ENCODE measurements at regions of chr7 and their contacts with region 1.

Region 1: GRCh38 chr7:28926871-28927597 is 31.1 kb downstream of the TRIL start:
- DNase-seq: peak; percentile 2 to 83 (median 44)
- ATAC-seq: peak; percentile 92
- H3K4me3 ChIP-seq: peak overlapping the region; percentile 42 to 55
- H3K4me3 Mint-ChIP-seq: peak overlapping the region; percentile 92
- H3K27ac ChIP-seq: no peak overlapping the region
- H3K27ac Mint-ChIP-seq: no peak overlapping the region
- H3K4me1 ChIP-seq: peaks cover 13% of the 10 kb centered on the region
- H3K4me1 Mint-ChIP-seq: peaks cover 20% of the 10 kb centered on the region
- H3K27me3 ChIP-seq: no peaks in the 10 kb centered on the region
- H3K27me3 Mint-ChIP-seq: peaks cover 11% of the 10 kb centered on the region
- CTCF ChIP-seq: peak; percentile 72

Region 2: GRCh38 chr7:28596245-28596935 is 330.6 kb before region 1 on chr7:
- CTCF ChIA-PET with region 1: no interaction called
- POLR2A ChIA-PET with region 1: no interaction called
- intact Hi-C with region 1: no loop called
- DNase-seq: no peak
- ATAC-seq: no peak
- H3K4me3 ChIP-seq: no peak overlapping the region
- H3K4me3 Mint-ChIP-seq: no peak overlapping the region
- H3K27ac ChIP-seq: no peak overlapping the region
- H3K27ac Mint-ChIP-seq: no peak overlapping the region
- H3K4me1 ChIP-seq: peaks cover 15% of the 10 kb centered on the region
- H3K4me1 Mint-ChIP-seq: peaks cover 8% of the 10 kb centered on the region
- H3K27me3 ChIP-seq: no peaks in the 10 kb centered on the region
- H3K27me3 Mint-ChIP-seq: no peaks in the 10 kb centered on the region
- CTCF ChIP-seq: no peak

Region 3: DNA sequence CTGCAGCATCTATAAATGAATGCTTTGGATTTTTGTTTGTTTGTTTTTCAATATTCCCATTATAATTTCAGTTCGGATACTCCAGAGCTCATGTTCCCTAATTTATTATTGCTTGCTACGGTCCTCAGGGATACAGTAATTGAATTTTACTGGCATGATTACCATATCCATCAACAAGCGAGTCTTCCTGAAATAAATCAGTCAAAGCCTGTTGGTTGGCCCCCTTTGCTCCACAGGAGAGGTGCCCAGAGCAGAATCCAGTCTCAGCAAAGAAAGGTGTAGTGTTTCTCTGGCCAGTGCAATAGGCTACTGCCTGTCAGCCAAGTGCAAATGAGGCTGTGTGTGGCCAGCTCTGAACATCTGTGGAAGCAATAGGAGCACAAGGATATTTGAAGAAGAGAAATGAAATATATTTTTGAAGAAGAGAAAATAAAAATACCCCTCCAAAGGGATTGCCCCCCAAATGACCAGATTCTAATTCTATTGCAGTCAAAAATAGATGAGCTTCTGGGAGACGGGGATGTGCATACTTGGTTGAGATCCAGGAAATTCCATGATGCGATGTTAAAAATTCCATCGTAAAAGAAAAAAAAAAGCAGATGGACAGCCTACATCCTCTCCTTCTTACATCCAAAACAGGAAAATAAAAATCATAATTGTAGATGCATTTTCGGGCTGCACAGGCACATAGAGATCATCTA is 13.0 kb after region 1 on chr7:
- CTCF ChIA-PET with region 1: interaction called, 20 read pairs
- POLR2A ChIA-PET with region 1: interaction called, 3 read pairs
- intact Hi-C with region 1: no loop called
- DNase-seq: no peak
- ATAC-seq: no peak
- H3K4me3 ChIP-seq: no peak overlapping the region
- H3K4me3 Mint-ChIP-seq: no peak overlapping the region
- H3K27ac ChIP-seq: no peak overlapping the region
- H3K27ac Mint-ChIP-seq: no peak overlapping the region
- H3K4me1 ChIP-seq: no peaks in the 10 kb centered on the region
- H3K4me1 Mint-ChIP-seq: no peaks in the 10 kb centered on the region
- H3K27me3 ChIP-seq: no peaks in the 10 kb centered on the region
- H3K27me3 Mint-ChIP-seq: peaks cover 20% of the 10 kb centered on the region
- CTCF ChIP-seq: no peak

Region 4: DNA sequence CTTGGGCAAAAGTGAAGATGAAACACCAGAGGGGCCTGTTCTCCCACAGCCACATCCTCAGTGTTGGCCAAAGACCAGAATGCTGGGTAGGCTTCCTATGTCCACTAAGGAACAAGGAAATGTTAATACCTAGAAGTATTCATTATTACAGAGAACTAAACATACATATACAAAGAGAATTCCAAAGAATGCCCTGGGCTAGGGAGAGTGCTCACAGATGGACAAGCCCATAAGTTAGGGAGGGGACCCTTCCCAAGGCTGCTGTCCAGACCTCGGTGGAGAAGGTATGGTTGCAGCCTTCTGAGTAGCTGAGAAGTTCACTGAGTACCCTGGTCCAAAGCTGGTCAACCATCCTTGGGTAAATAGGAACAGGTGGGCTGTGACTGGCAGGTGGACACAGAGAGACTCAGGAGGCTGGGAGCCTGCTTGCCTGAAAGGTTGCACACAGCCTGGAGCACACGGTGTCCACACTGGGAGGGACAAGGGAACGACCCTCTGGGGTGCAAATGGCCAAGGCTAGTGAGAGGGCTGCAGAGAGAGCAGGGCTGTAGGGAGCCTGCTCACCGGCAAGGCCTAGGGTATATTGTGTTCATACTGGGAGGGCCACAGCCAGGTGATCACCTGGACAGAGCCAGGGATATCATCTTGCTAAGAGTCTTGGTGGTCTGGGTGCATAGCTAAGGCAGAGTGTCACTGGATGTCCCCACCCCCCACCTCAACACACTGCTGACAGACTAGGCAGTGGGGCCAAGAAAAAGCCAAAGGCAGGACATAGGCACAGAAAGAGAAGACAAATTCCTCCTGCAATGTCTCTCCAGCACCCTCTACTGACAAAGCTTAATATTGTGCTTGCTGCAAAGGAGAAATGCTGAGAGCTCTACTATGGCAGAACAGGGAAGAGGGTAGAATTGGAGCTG is 179.0 kb after region 1 on chr7:
- CTCF ChIA-PET with region 1: interaction called, 17 read pairs
- POLR2A ChIA-PET with region 1: no interaction called
- intact Hi-C with region 1: loop called (anchors 1 kb)
- DNase-seq: peak in 2 of 9 experiments; percentile 40 to 54
- ATAC-seq: no peak
- H3K4me3 ChIP-seq: no peak overlapping the region
- H3K4me3 Mint-ChIP-seq: no peak overlapping the region
- H3K27ac ChIP-seq: no peak overlapping the region
- H3K27ac Mint-ChIP-seq: no peak overlapping the region
- H3K4me1 ChIP-seq: no peaks in the 10 kb centered on the region
- H3K4me1 Mint-ChIP-seq: peaks cover 3% of the 10 kb centered on the region
- H3K27me3 ChIP-seq: no peaks in the 10 kb centered on the region
- H3K27me3 Mint-ChIP-seq: no peaks in the 10 kb centered on the region
- CTCF ChIP-seq: no peak

Region 5: GRCh38 chr7:29408841-29409243 is 481.8 kb after region 1 on chr7:
- CTCF ChIA-PET with region 1: interaction called, 244 read pairs
- POLR2A ChIA-PET with region 1: interaction called, 3 read pairs
- intact Hi-C with region 1: loop called (anchors 1 kb)
- DNase-seq: peak; percentile 5 to 77 (median 55)
- ATAC-seq: peak; percentile 67
- H3K4me3 ChIP-seq: no peak overlapping the region
- H3K4me3 Mint-ChIP-seq: no peak overlapping the region
- H3K27ac ChIP-seq: no peak overlapping the region
- H3K27ac Mint-ChIP-seq: no peak overlapping the region
- H3K4me1 ChIP-seq: no peaks in the 10 kb centered on the region
- H3K4me1 Mint-ChIP-seq: no peaks in the 10 kb centered on the region
- H3K27me3 ChIP-seq: no peaks in the 10 kb centered on the region
- H3K27me3 Mint-ChIP-seq: peaks cover 4% of the 10 kb centered on the region
- CTCF ChIP-seq: peak; percentile 86